ENCODE measurements at regions of chr10 and their contacts with region 1.

Region 1: DNA sequence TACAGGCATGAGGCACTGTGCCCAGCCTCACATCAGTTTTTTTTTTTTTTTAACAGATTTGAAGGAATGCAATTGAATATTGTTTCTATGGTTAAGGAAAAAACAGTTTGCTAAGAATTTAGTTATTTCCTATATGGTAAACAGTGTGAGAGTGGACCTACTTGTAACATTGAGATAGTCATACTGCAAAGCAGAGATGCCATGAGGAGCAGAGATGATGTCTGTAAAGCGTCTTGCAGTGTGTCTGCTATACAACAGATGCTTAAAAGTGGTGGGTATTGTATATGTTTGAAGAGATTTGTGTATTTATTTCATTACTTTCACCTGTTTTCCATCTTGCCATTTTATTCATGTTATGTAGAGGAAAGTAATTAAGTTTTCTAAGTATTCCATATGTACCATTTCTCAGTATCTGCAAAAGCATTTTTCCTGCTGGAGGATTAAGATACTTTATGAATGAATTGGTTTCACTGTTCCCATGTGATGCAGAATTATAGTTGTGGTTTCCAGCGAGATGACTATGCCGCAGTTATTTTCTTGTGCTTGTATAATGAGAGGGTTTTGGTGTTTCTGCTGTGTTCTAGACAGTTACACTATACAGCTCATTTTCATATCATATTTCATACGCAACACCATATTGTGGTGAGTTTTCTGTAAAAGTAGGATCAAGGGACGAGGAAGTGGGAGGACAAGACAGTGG is 26.6 kb downstream of the TET1 start:
- DNase-seq: no peak

Region 2: GRCh38 chr10:68611227-68611626 is 24.5 kb after region 1 on chr10:
- CTCF ChIA-PET with region 1: interaction called, 10 read pairs
- POLR2A ChIA-PET with region 1: no interaction called
- DNase-seq: no peak

Measured in HEK293T (cell line).